MCF 10A (cell line): ENCODE measurements at regions of chr1 and their contacts with region 1.

Region 1: DNA sequence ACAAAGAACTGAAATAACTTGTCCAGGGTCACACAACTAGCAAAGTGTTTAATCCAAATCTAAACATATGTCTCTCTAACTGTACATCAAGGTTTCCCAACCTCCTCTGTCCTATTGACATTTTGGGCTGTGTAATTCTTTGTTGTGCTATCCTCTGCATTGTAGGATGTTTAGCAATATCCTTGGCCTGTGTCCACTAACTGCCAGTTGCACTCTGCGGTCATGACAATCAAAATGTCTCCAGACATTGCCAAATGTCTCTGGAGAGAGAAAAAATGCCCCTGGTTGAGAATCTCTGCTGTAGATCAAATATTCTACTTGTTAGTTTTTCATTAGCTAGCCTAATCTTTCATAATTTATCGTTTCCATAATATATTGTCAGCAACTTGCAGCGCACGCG is 353.4 kb upstream of the NEGR1 start:
- DNase-seq: peak; percentile 94
- H3K4me3 Mint-ChIP-seq: peak overlapping the region; percentile 5
- H3K27ac Mint-ChIP-seq: no peak overlapping the region
- H3K4me1 Mint-ChIP-seq: peaks cover 30% of the 10 kb centered on the region
- H3K27me3 Mint-ChIP-seq: peaks cover 22% of the 10 kb centered on the region
- CTCF ChIP-seq: no peak

Region 2: DNA sequence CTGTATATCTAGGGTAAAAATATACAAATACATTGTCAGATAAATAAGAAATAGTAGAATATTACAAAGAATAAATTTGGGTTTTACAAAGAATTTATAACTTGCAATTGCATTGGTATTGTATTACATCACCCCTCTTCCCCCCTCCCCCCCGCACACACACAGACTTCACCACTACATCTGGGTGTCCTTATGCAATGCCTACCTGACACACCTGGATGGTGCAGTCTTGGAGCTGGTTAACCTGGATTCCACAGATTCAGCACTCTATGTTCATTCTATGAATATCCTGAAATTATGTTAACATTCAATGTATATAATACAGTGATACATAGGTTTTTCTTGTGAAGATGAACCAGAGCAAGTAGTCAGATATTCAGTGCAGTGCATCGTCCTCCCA is 19.0 kb before region 1 on chr1:
- CTCF ChIA-PET with region 1: no interaction called
- POLR2A ChIA-PET with region 1: no interaction called
- intact Hi-C with region 1: no loop called
- DNase-seq: no peak
- H3K4me3 Mint-ChIP-seq: no peak overlapping the region
- H3K27ac Mint-ChIP-seq: no peak overlapping the region
- H3K4me1 Mint-ChIP-seq: no peaks in the 10 kb centered on the region
- H3K27me3 Mint-ChIP-seq: peaks cover 18% of the 10 kb centered on the region
- CTCF ChIP-seq: no peak

Region 3: DNA sequence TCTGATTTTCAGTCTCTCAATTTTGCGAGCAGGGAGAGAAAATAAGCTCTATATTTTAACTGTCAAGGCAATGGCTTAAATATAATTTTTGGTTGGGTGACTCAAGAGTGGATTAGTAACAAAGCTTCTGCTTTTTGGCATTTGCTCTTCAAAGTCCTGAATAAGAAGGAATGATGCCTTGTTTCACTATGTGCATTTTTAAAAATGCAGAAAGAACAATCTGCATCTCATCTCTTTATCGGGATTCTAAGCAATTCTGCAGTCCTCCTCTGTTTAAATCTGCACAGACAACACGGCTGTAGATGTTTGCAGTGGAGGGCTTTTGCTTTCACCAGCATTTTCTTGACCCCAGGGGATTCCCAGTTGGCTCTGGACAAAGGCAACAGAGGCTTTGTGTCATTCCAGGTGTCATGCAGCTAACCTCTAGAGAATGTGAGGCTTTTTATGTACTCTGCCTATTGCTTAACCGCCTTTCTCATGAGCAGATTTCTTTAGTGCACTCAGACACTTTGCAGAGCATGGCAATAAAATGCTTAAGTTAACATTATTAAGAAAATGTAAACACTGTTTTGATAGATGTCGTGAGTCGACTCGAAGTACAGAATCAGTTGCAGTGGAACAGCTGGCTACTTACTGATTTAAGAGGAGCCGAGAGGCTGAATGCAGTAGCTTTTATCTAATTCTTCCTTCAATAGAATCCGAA is 429.8 kb after region 1 on chr1:
- CTCF ChIA-PET with region 1: no interaction called
- POLR2A ChIA-PET with region 1: no interaction called
- intact Hi-C with region 1: loop called (anchors 10 kb)
- DNase-seq: peak; percentile 9
- H3K4me3 Mint-ChIP-seq: no peak overlapping the region
- H3K27ac Mint-ChIP-seq: no peak overlapping the region
- H3K4me1 Mint-ChIP-seq: no peaks in the 10 kb centered on the region
- H3K27me3 Mint-ChIP-seq: no peaks in the 10 kb centered on the region
- CTCF ChIP-seq: no peak